BJ (cell line): ENCODE measurements at regions of chr1 and their contacts with region 1.

Region 1: GRCh38 chr1:27725374-27726173 is at the start of gene FAM76A:
- DNase-seq: peak; percentile 94
- H3K4me3 ChIP-seq: peak within 1 kb of the TSS; percentile 73
- H3K27me3 ChIP-seq: no peaks in the 10 kb centered on the region
- CTCF ChIP-seq: peak; percentile 56
- polyA plus RNA-seq, gene FAM76A: 3.9 and 5.7 TPM in 2 replicates

Region 2: DNA sequence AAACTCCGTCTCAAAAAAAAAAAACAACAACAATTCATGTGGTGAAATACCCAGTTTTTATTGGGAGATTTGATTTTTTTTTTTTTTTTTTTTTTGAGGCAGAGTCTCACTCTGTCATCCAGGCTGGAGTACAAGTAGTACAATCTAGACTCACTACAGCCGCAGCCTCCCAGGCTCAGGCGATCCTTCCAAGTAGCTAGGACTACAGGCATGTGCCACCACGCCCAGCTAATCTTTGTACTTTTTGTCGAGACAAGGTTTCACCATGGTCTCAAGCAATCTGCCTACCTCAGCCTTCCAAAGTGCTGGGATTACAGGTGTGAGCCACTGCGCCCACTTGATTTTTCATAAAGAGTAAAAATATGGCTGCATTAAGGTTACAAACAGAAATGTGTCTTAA is 15.5 kb after region 1 on chr1:
- CTCF ChIA-PET with region 1: interaction called, 5 read pairs
- POLR2A ChIA-PET with region 1: interaction called, 21 read pairs
- DNase-seq: no peak
- H3K4me3 ChIP-seq: no peak overlapping the region
- H3K27me3 ChIP-seq: no peaks in the 10 kb centered on the region
- CTCF ChIP-seq: no peak